Right cardiac atrium (tissue), 5 donors: ENCODE measurements at regions of chr5 and their contacts with region 1.

Region 1: GRCh38 chr5:38540314-38540713 is 16.1 kb downstream of the LIFR start:
- DNase-seq: peak; percentile 49 to 80 (median 71)
- ATAC-seq: peak; percentile 89 to 90
- H3K4me3 ChIP-seq: no peak overlapping the region
- H3K27ac ChIP-seq: peak overlapping the region; percentile 64
- H3K4me1 ChIP-seq: peaks cover 24% of the 10 kb centered on the region
- H3K27me3 ChIP-seq: no peaks in the 10 kb centered on the region

Region 2: GRCh38 chr5:38441453-38442246 is 98.7 kb before region 1 on chr5:
- intact Hi-C with region 1: loop called in 1 of 4 experiments (anchors 10 kb)
- DNase-seq: peak; percentile 87 to 94 (median 87)
- ATAC-seq: peak; percentile 92 to 93
- H3K4me3 ChIP-seq: no peak overlapping the region
- H3K27ac ChIP-seq: no peak overlapping the region
- H3K4me1 ChIP-seq: no peaks in the 10 kb centered on the region
- H3K27me3 ChIP-seq: no peaks in the 10 kb centered on the region

Region 3: DNA sequence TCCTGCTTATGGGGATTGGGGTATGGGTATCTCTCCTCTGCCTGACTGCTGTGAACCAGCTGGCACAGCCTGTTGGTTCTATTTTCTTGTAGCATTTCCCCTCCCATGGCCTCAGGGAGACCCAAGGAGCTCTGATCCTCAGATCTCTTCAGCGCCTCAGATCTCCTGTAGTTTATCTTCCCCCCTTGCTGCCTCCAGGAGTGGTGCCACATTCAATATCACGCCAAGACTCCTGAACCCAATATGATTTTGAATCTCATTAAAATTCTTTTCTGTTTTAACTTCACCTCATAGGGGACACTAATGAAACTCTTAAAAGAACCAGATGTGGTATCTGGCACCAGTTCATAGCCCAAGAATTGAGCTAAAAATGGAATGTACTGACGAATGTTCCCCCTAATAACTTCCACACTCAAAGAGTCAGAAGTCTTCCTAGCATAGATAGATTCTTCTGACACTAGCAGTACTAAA is 75.7 kb after region 1 on chr5:
- intact Hi-C with region 1: no loop called
- DNase-seq: no peak
- ATAC-seq: no peak
- H3K4me3 ChIP-seq: no peak overlapping the region
- H3K27ac ChIP-seq: no peak overlapping the region
- H3K4me1 ChIP-seq: peaks cover 4% of the 10 kb centered on the region
- H3K27me3 ChIP-seq: no peaks in the 10 kb centered on the region